Activated naive CD4-positive, alpha-beta T cell treated with anti-CD3 and anti-CD28 coated beads for 36 hours (primary cell): ENCODE measurements at regions of chr20 and their contacts with region 1.

Region 1: GRCh38 chr20:5205348-5206210 is 78.8 kb downstream of the CDS2 start:
- DNase-seq: peak; percentile 86
- H3K4me3 Mint-ChIP-seq: no peak overlapping the region
- H3K27ac Mint-ChIP-seq: no peak overlapping the region
- H3K4me1 Mint-ChIP-seq: peaks cover 2% of the 10 kb centered on the region
- H3K27me3 Mint-ChIP-seq: no peaks in the 10 kb centered on the region

Region 2: DNA sequence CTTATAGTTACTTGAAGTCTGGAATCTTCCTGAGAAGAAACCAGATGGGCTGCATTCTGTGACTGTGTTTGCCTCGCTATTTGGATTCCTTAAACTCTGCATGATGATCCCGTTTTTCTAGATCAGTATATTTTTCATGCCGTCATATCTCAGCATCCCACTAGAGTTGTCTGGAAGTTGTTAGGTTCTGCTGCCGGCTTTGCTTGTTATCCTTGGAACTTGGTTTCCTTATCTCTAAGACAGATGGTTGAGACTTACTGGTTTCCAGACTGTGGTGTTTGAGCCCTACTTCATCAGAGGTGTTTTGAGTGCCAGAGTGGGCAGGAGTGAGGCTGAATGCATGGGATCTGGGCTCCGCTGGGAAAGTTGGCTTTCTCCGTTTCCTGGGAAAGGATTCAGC is 28.5 kb before region 1 on chr20:
- CTCF ChIA-PET with region 1: no interaction called
- intact Hi-C with region 1: no loop called
- DNase-seq: no peak
- H3K4me3 Mint-ChIP-seq: no peak overlapping the region
- H3K27ac Mint-ChIP-seq: no peak overlapping the region
- H3K4me1 Mint-ChIP-seq: peaks cover 4% of the 10 kb centered on the region
- H3K27me3 Mint-ChIP-seq: no peaks in the 10 kb centered on the region

Region 3: DNA sequence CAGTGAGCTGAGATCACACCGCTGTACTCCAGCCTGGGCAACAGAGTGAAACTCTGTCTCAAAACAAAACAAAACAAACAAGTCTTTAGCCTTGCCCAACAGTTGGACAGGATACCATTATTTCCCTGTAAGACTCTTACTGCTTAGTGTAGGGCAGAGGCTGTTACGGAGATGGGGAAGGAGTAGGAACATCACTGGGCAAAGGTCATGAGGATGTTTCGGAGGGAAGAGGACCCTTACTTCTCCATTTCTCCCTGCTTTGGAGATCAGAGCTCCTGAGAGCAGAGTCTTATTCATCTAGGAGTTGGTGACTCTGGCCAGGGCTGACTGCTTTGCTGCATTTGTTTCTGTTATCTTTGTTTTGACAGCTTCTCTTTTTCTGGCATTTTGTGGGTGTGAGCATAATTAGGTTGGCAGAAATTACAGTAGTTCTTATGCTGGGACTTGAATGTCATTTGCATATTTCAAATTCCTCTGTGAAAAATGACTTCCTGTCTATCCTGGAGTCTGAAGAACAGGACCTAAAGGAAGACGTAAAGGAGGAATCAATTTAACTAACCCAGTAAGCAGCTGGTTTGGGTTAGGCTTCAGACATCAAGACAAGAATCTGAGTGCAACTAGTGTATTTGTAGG is 10.2 kb after region 1 on chr20:
- CTCF ChIA-PET with region 1: interaction called, 58 read pairs
- intact Hi-C with region 1: no loop called
- DNase-seq: no peak
- H3K4me3 Mint-ChIP-seq: no peak overlapping the region
- H3K27ac Mint-ChIP-seq: no peak overlapping the region
- H3K4me1 Mint-ChIP-seq: no peaks in the 10 kb centered on the region
- H3K27me3 Mint-ChIP-seq: no peaks in the 10 kb centered on the region

Region 4: GRCh38 chr20:5393218-5393870 is 187.8 kb after region 1 on chr20:
- CTCF ChIA-PET with region 1: no interaction called
- intact Hi-C with region 1: no loop called
- DNase-seq: no peak
- H3K4me3 Mint-ChIP-seq: no peak overlapping the region
- H3K27ac Mint-ChIP-seq: no peak overlapping the region
- H3K4me1 Mint-ChIP-seq: no peaks in the 10 kb centered on the region
- H3K27me3 Mint-ChIP-seq: peaks cover 20% of the 10 kb centered on the region